HEK293 (cell line): ENCODE measurements at regions of chr12 and their contacts with region 1.

Region 1: GRCh38 chr12:122356192-122356635 is 66.3 kb downstream of the CLIP1 start:
- H3K4me3 ChIP-seq: no peak overlapping the region
- H3K27ac ChIP-seq: no peak overlapping the region
- H3K4me1 ChIP-seq: no peaks in the 10 kb centered on the region
- CTCF ChIP-seq: peak; percentile 63; the same call in 1 of the 2 replicates

Region 2: GRCh38 chr12:122282066-122282465 is 74.1 kb before region 1 on chr12:
- CTCF ChIA-PET with region 1: no interaction called
- POLR2A ChIA-PET with region 1: no interaction called
- H3K4me3 ChIP-seq: no peak overlapping the region
- H3K27ac ChIP-seq: no peak overlapping the region
- H3K4me1 ChIP-seq: peaks cover 3% of the 10 kb centered on the region; the same call in 1 of the 2 replicates
- CTCF ChIP-seq: no peak

Region 3: GRCh38 chr12:122345042-122345441 is 11.2 kb before region 1 on chr12:
- CTCF ChIA-PET with region 1: interaction called, 102 read pairs
- POLR2A ChIA-PET with region 1: no interaction called
- H3K4me3 ChIP-seq: no peak overlapping the region
- H3K27ac ChIP-seq: no peak overlapping the region
- H3K4me1 ChIP-seq: no peaks in the 10 kb centered on the region
- CTCF ChIP-seq: no peak

Region 4: DNA sequence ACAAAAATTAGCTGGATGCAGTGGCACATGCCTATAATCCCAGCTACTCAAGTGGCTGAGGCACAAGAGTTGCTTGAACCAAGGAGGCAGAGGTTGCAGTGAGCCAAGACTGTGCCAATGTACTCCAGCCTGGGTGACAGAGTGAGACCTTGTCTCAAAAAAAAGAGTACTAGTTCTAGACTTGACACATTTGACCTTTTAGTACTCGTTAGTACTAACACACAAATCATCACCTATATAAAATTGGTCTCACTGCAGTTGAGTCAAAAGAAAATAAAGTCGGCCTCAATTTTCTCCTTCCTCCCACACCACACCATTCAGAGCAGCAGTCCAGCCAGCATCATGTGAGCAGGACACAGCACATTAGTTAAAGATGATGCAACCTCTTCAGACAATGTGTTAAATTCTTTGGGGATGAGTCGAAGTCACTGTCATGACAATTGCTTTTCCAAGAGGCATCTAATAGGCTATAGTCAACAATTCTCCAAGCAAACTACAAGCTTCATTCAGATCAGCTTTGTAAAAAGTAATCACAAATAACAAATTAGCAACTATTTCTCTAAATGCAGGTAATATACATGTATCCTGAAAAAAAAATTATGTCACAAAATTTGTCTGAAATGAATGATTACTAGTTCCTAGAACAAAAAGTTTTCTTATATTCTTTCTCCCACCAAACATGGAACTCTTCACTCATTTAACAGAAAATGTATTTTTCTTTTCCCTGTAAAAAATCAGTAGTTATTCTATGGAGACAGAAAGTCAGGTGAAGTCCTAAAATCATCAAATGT is 10.7 kb after region 1 on chr12:
- CTCF ChIA-PET with region 1: interaction called, 13 read pairs
- POLR2A ChIA-PET with region 1: interaction called, 5 read pairs
- H3K4me3 ChIP-seq: no peak overlapping the region
- H3K27ac ChIP-seq: 0 out of 2 replicates have a peak overlapping the region, but pooled peaks have one; percentile 62
- H3K4me1 ChIP-seq: peaks cover 17% of the 10 kb centered on the region
- CTCF ChIP-seq: no peak